Activated T-helper 1 cell treated with anti-CD3 and anti-CD28 coated beads, Interleukin-12 subunit alpha, Interleukin-12 subunit beta, Interleukin-2, Interleukin-4 antibody, amounts not matched to agents 30 ng/mL and 10 ng/mL and 1 ng/mL, durations not matched to agents 14 hours and 24 hours and 36 hours (primary cell): ENCODE measurements at regions of chr16 and their contacts with region 1.

Region 1: DNA sequence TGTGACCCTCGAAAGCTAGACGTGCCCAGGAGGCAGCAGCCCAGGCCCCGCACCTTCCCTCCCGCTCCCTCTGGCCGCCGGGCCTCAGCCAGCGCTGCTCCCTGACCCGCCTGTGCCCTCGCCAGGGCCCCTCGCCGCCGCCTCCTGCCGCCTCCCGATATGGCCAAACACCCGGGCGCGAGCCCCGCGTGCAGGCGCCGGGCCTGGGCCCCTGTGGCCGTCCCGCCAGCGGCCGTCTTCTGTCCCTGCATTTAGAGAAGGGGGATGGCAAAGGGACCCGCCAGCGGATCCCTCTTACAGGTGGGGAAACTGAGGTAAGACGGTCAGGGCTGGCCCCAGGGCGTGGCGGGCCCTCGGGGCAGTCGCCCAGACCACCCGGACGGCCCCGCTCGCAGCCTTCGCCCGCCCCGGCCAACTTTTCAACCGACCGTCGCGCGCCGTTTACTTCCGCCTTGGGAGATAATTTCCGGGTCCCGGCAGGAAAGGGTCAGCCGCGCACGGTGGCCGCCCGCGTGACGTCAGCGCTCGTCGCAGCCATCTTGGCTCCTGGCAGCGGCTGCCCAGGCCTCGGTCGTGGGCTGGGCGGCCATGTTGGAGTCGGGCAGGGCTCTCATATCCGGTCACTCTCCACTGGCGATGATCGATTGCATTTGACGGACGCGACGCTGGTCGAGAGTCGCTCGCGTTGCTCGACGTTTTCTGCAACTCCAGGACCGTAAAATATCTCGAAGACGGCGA is 7.0 kb upstream of the GNG13 start:
- DNase-seq: peak; percentile 88
- H3K4me3 Mint-ChIP-seq: peak overlapping the region; percentile 100
- H3K27ac Mint-ChIP-seq: peak overlapping the region; percentile 97
- H3K4me1 Mint-ChIP-seq: peaks cover 12% of the 10 kb centered on the region
- H3K27me3 Mint-ChIP-seq: peaks cover 7% of the 10 kb centered on the region

Region 2: DNA sequence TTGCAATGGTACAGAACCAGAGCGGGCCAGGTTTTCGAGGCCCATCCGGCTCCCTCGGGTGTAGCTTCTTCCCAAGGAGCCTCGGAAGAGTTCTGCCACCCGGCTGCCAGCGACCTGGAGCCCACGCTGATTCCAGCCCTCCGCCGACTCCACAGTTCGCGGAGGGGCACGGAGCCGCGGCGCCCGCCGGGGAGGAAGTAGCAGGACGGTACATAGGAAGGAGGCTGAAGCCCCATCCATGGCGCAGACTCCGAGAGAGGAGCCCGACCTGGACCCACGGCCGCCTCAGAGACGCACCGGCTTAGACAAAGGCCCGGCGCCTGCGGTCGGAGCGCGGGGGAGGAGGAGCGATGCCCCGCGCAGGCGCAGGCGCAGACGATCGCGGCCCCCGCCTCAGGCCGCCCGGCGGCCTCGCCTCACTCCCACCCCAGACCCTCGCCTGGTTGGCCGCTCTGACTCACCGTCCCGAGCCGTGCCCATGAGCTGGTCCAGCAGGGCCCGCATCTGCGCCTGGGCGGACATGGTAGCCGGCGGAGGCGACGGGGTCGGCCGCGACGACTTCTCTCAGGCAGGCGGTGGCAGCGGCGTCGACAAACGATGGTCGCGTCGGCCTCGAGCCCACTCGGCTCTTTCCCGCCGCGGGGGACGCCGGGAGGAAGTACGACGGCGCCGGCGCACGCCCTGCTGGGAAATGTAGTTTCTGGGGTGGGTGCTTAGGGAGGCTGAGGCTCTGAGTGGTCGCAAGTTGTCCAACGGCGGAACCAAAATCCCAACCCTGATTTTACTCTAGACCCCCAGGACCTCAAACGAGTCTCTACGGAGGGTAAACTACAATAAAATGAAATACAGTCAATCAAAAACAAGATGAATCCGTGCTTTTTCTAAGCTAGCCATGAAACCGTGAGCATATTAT is 578.4 kb before region 1 on chr16 and contains the start of gene LUC7L:
- intact Hi-C with region 1: no loop called
- DNase-seq: peak; percentile 80
- H3K4me3 Mint-ChIP-seq: peak within 1 kb of the TSS; percentile 94
- H3K27ac Mint-ChIP-seq: peak within 1 kb of the TSS; percentile 91
- H3K4me1 Mint-ChIP-seq: peaks cover 31% of the 10 kb centered on the region
- H3K27me3 Mint-ChIP-seq: no peaks in the 10 kb centered on the region
- total RNA-seq, gene LUC7L: 77.7 and 83.0 TPM in 2 replicates

Region 3: GRCh38 chr16:684067-684794 is 123.3 kb before region 1 on chr16 and contains the start of gene JMJD8:
- intact Hi-C with region 1: loop called (anchors 1 kb)
- DNase-seq: peak; percentile 97
- H3K4me3 Mint-ChIP-seq: peak within 1 kb of the TSS; percentile 83
- H3K27ac Mint-ChIP-seq: peak within 1 kb of the TSS; percentile 58
- H3K4me1 Mint-ChIP-seq: peaks cover 5% of the 10 kb centered on the region
- H3K27me3 Mint-ChIP-seq: no peaks in the 10 kb centered on the region
- total RNA-seq, gene JMJD8: 63.4 and 71.4 TPM in 2 replicates

Region 4: DNA sequence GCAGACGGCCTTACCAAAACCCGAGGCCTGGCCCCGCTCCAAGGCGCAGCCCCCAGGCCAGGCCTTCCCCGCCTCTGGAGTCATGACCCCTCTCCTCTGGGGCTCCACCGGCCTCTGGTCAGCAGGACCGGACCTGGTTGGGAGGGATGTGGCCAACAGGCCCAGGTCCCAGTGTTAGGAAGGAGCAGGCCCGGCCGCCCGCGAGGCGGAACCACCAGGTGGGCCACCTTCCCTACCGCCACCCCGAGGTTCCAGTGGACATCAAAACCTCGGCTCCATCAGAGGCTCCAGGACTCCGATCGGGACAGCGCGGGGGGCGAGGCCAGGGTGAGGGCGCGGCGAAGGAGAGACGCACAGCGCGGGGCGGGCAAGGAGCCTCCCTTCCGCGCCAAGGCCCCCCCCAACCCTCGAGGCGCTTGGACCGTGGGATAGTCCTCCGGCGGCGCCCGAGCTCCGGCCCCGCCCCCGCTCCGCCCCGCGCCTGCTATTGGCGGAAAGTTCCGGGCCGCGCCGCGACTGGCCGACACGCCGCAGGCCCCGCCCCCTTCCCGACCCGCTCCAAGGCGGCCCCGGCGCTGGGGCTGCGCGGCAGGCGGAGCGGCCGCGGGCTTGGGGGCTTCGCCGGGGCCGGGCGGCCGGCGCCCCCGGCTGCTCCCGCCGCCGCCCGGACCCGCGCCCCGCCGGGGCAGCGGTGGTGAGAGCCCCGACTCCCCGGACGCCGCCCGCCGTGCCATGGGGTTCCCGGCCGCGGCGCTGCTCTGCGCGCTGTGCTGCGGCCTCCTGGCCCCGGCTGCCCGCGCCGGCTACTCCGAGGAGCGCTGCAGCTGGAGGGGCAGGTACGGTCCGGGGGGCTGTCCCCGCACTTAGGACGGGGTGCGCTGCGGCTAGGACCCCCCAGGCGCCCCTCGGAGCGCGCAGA is 92.7 kb before region 1 on chr16 and contains the start of gene METRN:
- intact Hi-C with region 1: loop called (anchors 5 kb)
- DNase-seq: peak; percentile 88
- H3K4me3 Mint-ChIP-seq: peak within 1 kb of the TSS; percentile 60
- H3K27ac Mint-ChIP-seq: no peak within 1 kb of the TSS
- H3K4me1 Mint-ChIP-seq: no peaks in the 10 kb centered on the region
- H3K27me3 Mint-ChIP-seq: peaks cover 19% of the 10 kb centered on the region
- total RNA-seq, gene METRN: 21.8 and 29.6 TPM in 2 replicates

Region 5: GRCh38 chr16:740764-741505 is 66.6 kb before region 1 on chr16 and contains the start of gene CIAO3:
- intact Hi-C with region 1: loop called (anchors 1 kb)
- DNase-seq: peak; percentile 92
- H3K4me3 Mint-ChIP-seq: peak within 1 kb of the TSS; percentile 85
- H3K27ac Mint-ChIP-seq: peak within 1 kb of the TSS; percentile 73
- H3K4me1 Mint-ChIP-seq: peaks cover 9% of the 10 kb centered on the region
- H3K27me3 Mint-ChIP-seq: no peaks in the 10 kb centered on the region
- total RNA-seq, gene CIAO3: 41.0 and 43.1 TPM in 2 replicates

Region 6: DNA sequence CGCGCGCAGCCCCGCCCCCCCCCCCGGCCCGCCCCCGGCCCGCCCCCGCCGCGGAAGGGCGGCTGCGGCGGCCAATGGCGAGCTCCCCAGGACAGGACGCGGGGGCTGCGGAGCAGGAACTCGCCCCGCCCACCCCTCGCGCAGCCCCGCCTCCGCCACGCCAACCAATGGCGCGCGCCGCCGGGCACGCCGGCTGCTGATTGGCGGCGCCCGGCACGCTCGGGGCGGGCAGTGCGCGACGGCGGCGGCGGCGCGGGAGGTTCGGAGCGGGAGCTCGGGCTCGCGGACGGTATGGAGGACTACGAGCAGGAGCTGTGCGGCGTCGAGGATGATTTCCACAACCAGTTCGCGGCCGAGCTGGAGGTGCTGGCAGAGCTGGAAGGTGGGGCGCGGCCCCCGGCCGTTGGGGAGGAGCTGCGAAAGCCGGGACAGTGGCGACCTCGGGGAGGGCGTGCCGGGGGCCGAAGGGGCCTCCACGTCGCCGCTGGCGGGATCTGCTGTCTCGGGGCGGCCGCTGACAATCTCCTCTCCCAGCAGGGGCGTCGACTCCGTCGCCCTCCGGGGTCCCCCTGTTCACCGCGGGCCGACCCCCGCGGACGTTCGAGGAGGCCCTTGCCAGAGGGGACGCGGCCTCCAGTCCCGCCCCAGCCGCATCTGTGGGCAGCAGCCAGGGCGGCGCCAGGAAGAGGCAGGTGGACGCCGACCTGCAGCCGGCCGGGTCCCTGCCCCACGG is 19.0 kb before region 1 on chr16 and contains the start of gene CHTF18:
- intact Hi-C with region 1: loop called (anchors 1 kb)
- DNase-seq: peak; percentile 92
- H3K4me3 Mint-ChIP-seq: peak within 1 kb of the TSS; percentile 92
- H3K27ac Mint-ChIP-seq: peak within 1 kb of the TSS; percentile 79
- H3K4me1 Mint-ChIP-seq: no peaks in the 10 kb centered on the region
- H3K27me3 Mint-ChIP-seq: no peaks in the 10 kb centered on the region
- total RNA-seq, gene CHTF18: 142 and 154 TPM in 2 replicates

Region 7: GRCh38 chr16:852451-853185 is 45.1 kb after region 1 on chr16:
- intact Hi-C with region 1: no loop called
- DNase-seq: no peak
- H3K4me3 Mint-ChIP-seq: no peak overlapping the region
- H3K27ac Mint-ChIP-seq: no peak overlapping the region
- H3K4me1 Mint-ChIP-seq: no peaks in the 10 kb centered on the region
- H3K27me3 Mint-ChIP-seq: no peaks in the 10 kb centered on the region

Region 8: GRCh38 chr16:970766-971581 is 163.5 kb after region 1 on chr16 and contains the start of gene LMF1:
- intact Hi-C with region 1: loop called (anchors 2 kb)
- DNase-seq: peak; percentile 94
- H3K4me3 Mint-ChIP-seq: peak within 1 kb of the TSS; percentile 77
- H3K27ac Mint-ChIP-seq: peak within 1 kb of the TSS; percentile 73
- H3K4me1 Mint-ChIP-seq: peaks cover 8% of the 10 kb centered on the region
- H3K27me3 Mint-ChIP-seq: peaks cover 9% of the 10 kb centered on the region
- total RNA-seq, gene LMF1: 6.8 and 10.4 TPM in 2 replicates

Region 9: DNA sequence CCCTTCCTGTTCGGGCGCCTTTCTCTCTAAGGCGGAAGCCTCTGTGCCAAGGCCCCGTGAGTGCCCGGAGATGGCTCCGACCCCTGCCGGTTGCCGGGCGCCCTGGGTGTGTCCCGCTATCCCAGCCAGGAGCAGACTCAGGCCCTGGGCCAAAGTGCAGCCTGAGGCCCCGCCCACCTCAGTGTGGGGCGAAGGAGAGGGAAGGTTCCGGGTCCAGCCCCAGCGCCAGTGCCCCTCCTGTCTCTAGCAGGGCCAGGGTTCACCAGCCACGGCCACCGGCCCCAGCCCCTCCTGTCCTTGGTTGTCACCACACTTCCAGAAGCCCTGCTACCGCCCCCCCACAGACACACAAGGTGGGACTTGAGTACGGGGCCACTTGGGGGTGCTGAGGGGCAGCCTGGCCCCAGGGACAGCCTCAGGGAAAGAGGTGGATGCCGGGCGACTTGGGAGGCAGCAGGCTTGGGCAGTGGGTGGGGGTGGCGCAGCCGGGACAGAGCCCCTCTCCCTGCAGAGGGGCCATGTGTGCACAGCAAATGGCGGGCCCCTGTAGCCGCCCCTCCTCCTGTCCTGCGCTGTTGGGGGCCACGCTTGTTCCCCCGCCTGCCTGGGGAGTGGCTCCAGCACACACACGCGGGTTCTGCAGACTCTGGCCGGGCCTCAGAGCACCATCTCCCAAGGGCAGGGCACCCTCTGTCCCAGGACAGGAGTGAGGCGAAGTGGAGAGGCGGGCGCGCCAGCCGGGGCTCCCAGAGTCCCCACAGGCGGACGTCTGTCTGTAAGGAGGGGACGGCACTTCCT is 282.5 kb after region 1 on chr16:
- intact Hi-C with region 1: no loop called
- DNase-seq: no peak
- H3K4me3 Mint-ChIP-seq: no peak overlapping the region
- H3K27ac Mint-ChIP-seq: no peak overlapping the region
- H3K4me1 Mint-ChIP-seq: no peaks in the 10 kb centered on the region
- H3K27me3 Mint-ChIP-seq: no peaks in the 10 kb centered on the region